ENCODE measurements at regions of chr3 and their contacts with region 1.

Region 1: DNA sequence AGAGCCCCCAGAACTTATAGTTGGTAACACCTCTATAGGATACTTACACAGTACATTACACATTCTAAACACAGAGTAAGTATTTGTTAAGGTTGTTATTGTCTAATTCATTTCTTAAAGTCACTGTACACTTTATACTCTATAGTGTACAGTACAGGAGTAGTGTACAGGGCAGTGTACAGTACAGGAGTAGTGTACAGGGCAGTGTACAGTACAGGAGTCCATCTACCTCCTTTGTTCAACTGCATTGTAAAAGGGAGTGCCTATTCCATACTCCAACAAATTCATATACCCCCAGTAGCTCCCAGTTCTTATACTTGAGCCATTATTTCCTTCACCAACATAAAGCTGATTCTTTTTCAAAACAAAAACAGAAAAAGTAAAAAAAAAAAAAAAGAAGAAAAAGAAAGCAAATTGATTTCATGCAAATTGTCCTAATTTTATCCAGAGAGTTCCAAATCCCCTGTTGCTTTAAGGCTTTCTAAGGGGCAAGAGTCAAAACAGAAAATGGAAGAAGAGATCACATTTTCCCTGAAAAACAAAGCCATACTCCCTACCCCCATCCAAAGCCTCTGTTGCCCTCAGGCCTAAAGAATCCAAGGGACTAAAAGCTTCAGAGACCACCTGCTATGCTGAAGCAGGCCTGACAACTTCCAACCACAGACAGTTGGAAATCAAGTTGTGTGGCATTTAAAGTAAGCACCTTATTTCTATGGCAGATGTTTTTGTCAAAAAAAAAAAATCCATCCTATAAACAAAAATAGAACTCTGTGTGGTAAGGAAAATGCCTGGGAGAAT is 125.6 kb downstream of the PLCH1 start:
- DNase-seq: no peak
- ATAC-seq: no peak
- H3K4me3 ChIP-seq: no peak overlapping the region
- H3K27ac ChIP-seq: no peak overlapping the region
- H3K4me1 ChIP-seq: no peaks in the 10 kb centered on the region
- H3K27me3 ChIP-seq: no peaks in the 10 kb centered on the region
- CTCF ChIP-seq: no peak

Region 2: GRCh38 chr3:155270485-155271342 is 348.6 kb before region 1 on chr3:
- CTCF ChIA-PET with region 1: no interaction called
- POLR2A ChIA-PET with region 1: interaction called, 10 read pairs
- in situ Hi-C with region 1: no loop called
- intact Hi-C with region 1: no loop called
- DNase-seq: no peak
- ATAC-seq: no peak
- H3K4me3 ChIP-seq: no peak overlapping the region
- H3K27ac ChIP-seq: no peak overlapping the region
- H3K4me1 ChIP-seq: no peaks in the 10 kb centered on the region
- H3K27me3 ChIP-seq: no peaks in the 10 kb centered on the region
- CTCF ChIP-seq: no peak

Region 3: DNA sequence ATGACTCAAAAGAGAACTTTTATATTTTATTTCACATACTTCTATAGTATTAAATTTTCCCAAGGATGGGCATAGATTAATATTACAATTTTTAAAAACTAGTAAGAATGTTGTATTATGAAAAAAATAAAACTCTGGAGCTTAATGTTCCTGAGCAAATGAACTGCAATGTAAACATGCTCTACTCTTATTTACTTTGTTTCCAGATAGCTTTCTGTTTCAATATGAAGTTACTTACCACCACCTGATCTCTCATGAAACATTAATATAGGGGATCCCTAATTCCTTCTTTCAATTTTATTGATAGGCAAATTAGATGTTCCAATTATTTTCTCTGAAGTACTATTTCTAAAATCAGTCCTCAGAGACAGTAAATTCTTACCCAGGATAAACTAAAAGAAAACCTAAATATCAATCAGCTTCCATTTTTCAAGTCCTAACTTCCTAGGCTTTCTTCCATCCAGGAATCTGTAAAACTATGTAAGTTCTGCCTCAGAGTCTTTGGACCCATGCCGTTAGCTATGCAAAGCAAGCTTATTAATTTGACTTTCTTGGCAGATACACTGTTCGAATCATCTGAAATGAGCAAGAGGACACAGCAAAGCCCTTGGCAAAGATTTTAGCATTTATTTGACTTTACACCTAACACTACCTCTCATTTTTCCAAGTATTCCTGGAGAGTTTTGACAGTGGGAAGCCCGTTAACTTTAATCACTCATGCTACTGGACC is 32.3 kb after region 1 on chr3:
- CTCF ChIA-PET with region 1: no interaction called
- POLR2A ChIA-PET with region 1: no interaction called
- in situ Hi-C with region 1: no loop called
- intact Hi-C with region 1: no loop called
- DNase-seq: no peak
- ATAC-seq: no peak
- H3K4me3 ChIP-seq: no peak overlapping the region
- H3K27ac ChIP-seq: no peak overlapping the region
- H3K4me1 ChIP-seq: no peaks in the 10 kb centered on the region
- H3K27me3 ChIP-seq: no peaks in the 10 kb centered on the region; the same call in 1 of the 2 replicates
- CTCF ChIP-seq: no peak

Region 4: GRCh38 chr3:155912579-155913190 is 293.4 kb after region 1 on chr3:
- CTCF ChIA-PET with region 1: no interaction called
- POLR2A ChIA-PET with region 1: no interaction called
- in situ Hi-C with region 1: no loop called
- intact Hi-C with region 1: no loop called
- DNase-seq: no peak
- ATAC-seq: 0 out of 2 replicates have a peak, but pooled peaks have one; percentile 30
- H3K4me3 ChIP-seq: no peak overlapping the region
- H3K27ac ChIP-seq: no peak overlapping the region
- H3K4me1 ChIP-seq: no peaks in the 10 kb centered on the region
- H3K27me3 ChIP-seq: no peaks in the 10 kb centered on the region
- CTCF ChIP-seq: no peak